A673 (cell line): ENCODE measurements at regions of chr14 and their contacts with region 1.

Region 1: GRCh38 chr14:54944737-54945391 is 42.2 kb upstream of the GCH1 start:
- DNase-seq: no peak
- H3K4me3 ChIP-seq: no peak overlapping the region
- H3K27ac ChIP-seq: no peak overlapping the region
- H3K4me1 ChIP-seq: no peaks in the 10 kb centered on the region
- H3K27me3 ChIP-seq: no peaks in the 10 kb centered on the region
- CTCF ChIP-seq: no peak

Region 2: GRCh38 chr14:54549862-54550261 is 395.0 kb before region 1 on chr14:
- CTCF ChIA-PET with region 1: no interaction called
- POLR2A ChIA-PET with region 1: no interaction called
- intact Hi-C with region 1: no loop called
- DNase-seq: no peak
- H3K4me3 ChIP-seq: no peak overlapping the region
- H3K27ac ChIP-seq: no peak overlapping the region
- H3K4me1 ChIP-seq: no peaks in the 10 kb centered on the region
- H3K27me3 ChIP-seq: no peaks in the 10 kb centered on the region
- CTCF ChIP-seq: no peak

Region 3: GRCh38 chr14:54922598-54922997 is 22.3 kb before region 1 on chr14:
- CTCF ChIA-PET with region 1: no interaction called
- POLR2A ChIA-PET with region 1: no interaction called
- intact Hi-C with region 1: no loop called
- DNase-seq: no peak
- H3K4me3 ChIP-seq: no peak overlapping the region
- H3K27ac ChIP-seq: no peak overlapping the region
- H3K4me1 ChIP-seq: no peaks in the 10 kb centered on the region
- H3K27me3 ChIP-seq: no peaks in the 10 kb centered on the region
- CTCF ChIP-seq: no peak

Region 4: DNA sequence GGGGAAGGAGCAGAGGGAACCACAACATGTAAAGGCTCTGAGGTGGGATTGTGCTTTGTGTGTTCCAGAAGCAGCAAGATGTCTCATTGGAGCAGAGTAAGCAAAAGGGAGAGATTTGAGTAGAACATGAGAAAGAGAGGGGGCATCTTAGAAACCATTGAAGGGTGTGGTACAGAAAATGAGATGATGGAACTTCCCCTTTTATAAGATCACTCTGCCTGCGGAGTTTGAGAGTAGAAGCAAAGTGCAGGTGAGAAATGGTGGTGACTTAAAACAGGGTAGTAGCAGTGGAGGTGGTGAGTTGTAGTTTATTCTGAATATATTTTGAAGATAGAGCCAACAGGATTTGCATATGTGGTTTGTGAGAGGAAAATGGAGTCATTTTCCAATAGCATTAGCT is 382.3 kb after region 1 on chr14:
- CTCF ChIA-PET with region 1: no interaction called
- POLR2A ChIA-PET with region 1: interaction called, 13 read pairs
- intact Hi-C with region 1: no loop called
- DNase-seq: no peak
- H3K4me3 ChIP-seq: no peak overlapping the region
- H3K27ac ChIP-seq: no peak overlapping the region
- H3K4me1 ChIP-seq: no peaks in the 10 kb centered on the region
- H3K27me3 ChIP-seq: no peaks in the 10 kb centered on the region
- CTCF ChIP-seq: no peak

Region 5: DNA sequence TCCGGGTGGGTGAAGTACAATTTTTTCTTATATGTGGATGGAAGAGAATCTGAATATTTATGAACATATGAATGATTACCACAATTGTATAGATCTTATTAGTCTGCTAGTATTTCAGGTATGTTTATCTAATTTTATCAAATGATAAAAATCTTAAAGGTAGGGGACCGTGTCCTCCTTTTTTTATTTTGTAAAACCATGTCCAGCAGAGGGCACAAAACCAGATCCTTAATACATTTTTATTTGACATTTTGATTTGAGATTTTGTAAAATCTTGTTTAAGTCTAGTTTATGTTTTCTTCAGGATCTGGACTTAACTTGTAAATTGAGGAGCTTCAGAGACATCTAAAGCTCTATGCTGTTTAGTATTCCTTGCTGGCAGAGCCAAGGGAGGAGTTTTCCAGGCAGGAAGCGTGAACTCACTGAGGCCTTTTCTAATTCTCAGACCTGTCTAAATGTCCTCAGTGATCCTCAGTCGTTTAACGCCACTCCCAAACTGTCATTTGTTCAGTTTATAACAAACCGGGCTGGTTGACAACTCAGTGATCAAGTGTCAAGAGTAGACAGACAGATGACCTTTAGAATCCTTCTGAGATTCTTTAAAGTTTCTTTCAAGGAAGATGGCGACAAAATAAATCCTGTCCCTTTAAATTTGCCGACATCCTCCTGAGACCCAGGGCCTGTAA is 899.0 kb after region 1 on chr14:
- CTCF ChIA-PET with region 1: no interaction called
- POLR2A ChIA-PET with region 1: no interaction called
- intact Hi-C with region 1: no loop called
- DNase-seq: no peak
- H3K4me3 ChIP-seq: no peak overlapping the region
- H3K27ac ChIP-seq: no peak overlapping the region
- H3K4me1 ChIP-seq: peaks cover 7% of the 10 kb centered on the region
- H3K27me3 ChIP-seq: no peaks in the 10 kb centered on the region
- CTCF ChIP-seq: peak; percentile 41